Panc1 (cell line): ENCODE measurements at regions of chr11 and their contacts with region 1.

Region 1: GRCh38 chr11:63478896-63479295 is 12.1 kb downstream of the PLAAT5 start:
- DNase-seq: peak; percentile 50
- ATAC-seq: peak; percentile 90
- H3K4me3 ChIP-seq: no peak overlapping the region
- H3K27ac ChIP-seq: no peak overlapping the region
- H3K4me1 ChIP-seq: no peaks in the 10 kb centered on the region
- H3K27me3 ChIP-seq: no peaks in the 10 kb centered on the region
- CTCF ChIP-seq: peak; percentile 94

Region 2: DNA sequence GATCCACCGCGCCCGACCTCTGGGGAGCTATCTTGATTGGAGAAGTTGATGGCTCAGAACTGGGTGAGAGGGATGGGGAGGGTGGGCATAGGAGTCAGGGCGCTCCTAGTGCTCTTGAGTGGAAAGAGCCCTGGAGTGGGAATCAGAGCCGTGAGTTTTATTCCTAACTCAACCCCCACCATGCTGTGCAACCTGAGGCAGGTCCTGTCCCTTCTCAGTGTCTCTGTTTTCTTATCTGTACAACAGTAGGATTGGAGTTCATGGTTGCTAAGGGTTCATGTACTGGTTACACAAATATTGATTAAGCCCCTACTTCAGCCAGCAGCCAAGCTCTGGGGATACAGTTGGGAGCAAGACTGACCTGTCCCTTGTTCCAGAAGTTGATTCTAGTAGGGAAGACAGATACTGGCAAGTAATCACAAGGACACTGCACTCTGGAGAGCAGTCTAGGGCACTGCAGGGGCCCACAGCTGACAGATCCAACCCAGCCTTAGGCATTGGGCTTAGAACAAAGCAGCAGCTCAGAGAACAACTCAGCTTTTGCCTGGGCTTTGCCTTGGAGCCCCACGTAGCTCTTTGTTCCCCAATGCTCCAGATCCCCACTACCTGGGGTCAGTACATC is 1811.1 kb before region 1 on chr11:
- CTCF ChIA-PET with region 1: no interaction called
- POLR2A ChIA-PET with region 1: interaction called, 17 read pairs
- in situ Hi-C with region 1: no loop called
- intact Hi-C with region 1: no loop called
- DNase-seq: no peak
- ATAC-seq: 0 out of 2 replicates have a peak, but pooled peaks have one; percentile 50
- H3K4me3 ChIP-seq: no peak overlapping the region
- H3K27ac ChIP-seq: no peak overlapping the region
- H3K4me1 ChIP-seq: no peaks in the 10 kb centered on the region
- H3K27me3 ChIP-seq: no peaks in the 10 kb centered on the region
- CTCF ChIP-seq: no peak

Region 3: DNA sequence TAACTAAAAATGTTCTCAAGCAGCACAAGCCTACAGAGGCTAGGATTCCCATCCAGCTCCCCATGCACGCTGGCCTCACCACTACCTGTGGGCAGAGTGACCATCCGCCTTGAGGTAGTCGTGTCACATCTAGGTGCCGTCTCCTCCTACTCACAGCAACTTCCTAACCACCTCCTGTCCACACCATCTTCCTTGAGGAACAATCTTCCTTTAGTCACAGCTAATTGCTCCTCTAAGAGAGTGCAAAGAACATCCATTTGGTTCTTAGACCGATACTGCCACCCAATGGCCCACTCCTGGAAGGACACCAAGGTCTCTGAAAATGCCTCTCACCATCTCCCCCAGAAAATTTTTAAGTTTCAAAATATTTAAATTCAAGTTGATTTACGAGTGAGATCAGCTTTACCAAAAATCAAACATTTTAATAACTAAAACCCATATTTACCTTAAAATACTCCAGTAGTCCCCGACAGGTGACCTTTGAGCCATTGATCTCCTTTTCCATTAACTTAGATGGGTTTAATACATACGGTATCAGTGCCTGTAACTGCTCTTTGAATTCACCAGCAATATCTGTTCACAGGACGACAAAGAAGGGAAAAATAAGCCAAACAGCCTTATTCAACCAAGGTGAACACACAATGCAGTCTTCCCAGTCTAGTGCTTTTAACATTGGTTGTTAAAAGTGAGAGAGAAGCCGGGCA is 157.0 kb after region 1 on chr11:
- CTCF ChIA-PET with region 1: interaction called, 6 read pairs
- POLR2A ChIA-PET with region 1: no interaction called
- in situ Hi-C with region 1: no loop called
- intact Hi-C with region 1: loop called (anchors 2 kb)
- DNase-seq: no peak
- ATAC-seq: peak; percentile 86
- H3K4me3 ChIP-seq: no peak overlapping the region
- H3K27ac ChIP-seq: no peak overlapping the region
- H3K4me1 ChIP-seq: no peaks in the 10 kb centered on the region
- H3K27me3 ChIP-seq: no peaks in the 10 kb centered on the region
- CTCF ChIP-seq: peak; percentile 81

Region 4: GRCh38 chr11:63738720-63739360 is 259.9 kb after region 1 on chr11:
- CTCF ChIA-PET with region 1: no interaction called
- POLR2A ChIA-PET with region 1: no interaction called
- in situ Hi-C with region 1: no loop called
- intact Hi-C with region 1: loop called (anchors 10 kb)
- DNase-seq: peak; percentile 60
- ATAC-seq: no peak
- H3K4me3 ChIP-seq: no peak overlapping the region
- H3K27ac ChIP-seq: no peak overlapping the region
- H3K4me1 ChIP-seq: no peaks in the 10 kb centered on the region
- H3K27me3 ChIP-seq: no peaks in the 10 kb centered on the region
- CTCF ChIP-seq: peak; percentile 89